ENCODE measurements at regions of chr4 and their contacts with region 1.

Region 1: GRCh38 chr4:39469429-39470077 is 10.7 kb downstream of the LIAS start:
- DNase-seq: peak; percentile 81
- ATAC-seq: peak; percentile 99
- H3K4me3 ChIP-seq: peak overlapping the region in 1 of 5 experiments; percentile 14
- H3K4me3 Mint-ChIP-seq: peak overlapping the region; percentile 59
- H3K27ac ChIP-seq: peak overlapping the region; percentile 36 to 68
- H3K27ac Mint-ChIP-seq: peak overlapping the region; percentile 92
- H3K4me1 ChIP-seq: peaks cover 5 to 7% of the 10 kb centered on the region in 2 donors
- H3K4me1 Mint-ChIP-seq: peaks cover 9% of the 10 kb centered on the region
- H3K27me3 ChIP-seq: no peaks in the 10 kb centered on the region
- H3K27me3 Mint-ChIP-seq: no peaks in the 10 kb centered on the region
- CTCF ChIP-seq: peak; percentile 87

Region 2: GRCh38 chr4:39446751-39447573 is 22.6 kb before region 1 on chr4:
- CTCF ChIA-PET with region 1: interaction called, 13 read pairs
- POLR2A ChIA-PET with region 1: no interaction called
- intact Hi-C with region 1: no loop called
- DNase-seq: peak; percentile 94
- ATAC-seq: peak; percentile 94
- H3K4me3 ChIP-seq: peak overlapping the region; percentile 12 to 64 (median 52)
- H3K4me3 Mint-ChIP-seq: peak overlapping the region; percentile 89
- H3K27ac ChIP-seq: peak overlapping the region; percentile 69
- H3K27ac Mint-ChIP-seq: peak overlapping the region; percentile 91
- H3K4me1 ChIP-seq: peaks cover 13 to 18% of the 10 kb centered on the region in 2 donors
- H3K4me1 Mint-ChIP-seq: peaks cover 23% of the 10 kb centered on the region
- H3K27me3 ChIP-seq: no peaks in the 10 kb centered on the region
- H3K27me3 Mint-ChIP-seq: no peaks in the 10 kb centered on the region
- CTCF ChIP-seq: peak; percentile 51

Region 3: GRCh38 chr4:39458505-39459300 is 10.8 kb before region 1 on chr4 and contains the starts of genes LIAS and RPL9:
- CTCF ChIA-PET with region 1: interaction called, 18 read pairs
- POLR2A ChIA-PET with region 1: interaction called, 5 read pairs
- intact Hi-C with region 1: loop called (anchors 1 kb)
- DNase-seq: peak; percentile 98
- ATAC-seq: peak; percentile 86
- H3K4me3 ChIP-seq: peak within 1 kb of the TSS; percentile 77 to 100 (median 98)
- H3K4me3 Mint-ChIP-seq: peak within 1 kb of the TSS; percentile 97
- H3K27ac ChIP-seq: peak within 1 kb of the TSS; percentile 98 to 99
- H3K27ac Mint-ChIP-seq: peak within 1 kb of the TSS; percentile 99
- H3K4me1 ChIP-seq: peaks cover 19 to 27% of the 10 kb centered on the region in 2 donors
- H3K4me1 Mint-ChIP-seq: peaks cover 38% of the 10 kb centered on the region
- H3K27me3 ChIP-seq: no peaks in the 10 kb centered on the region
- H3K27me3 Mint-ChIP-seq: no peaks in the 10 kb centered on the region
- CTCF ChIP-seq: no peak
- total RNA-seq, gene LIAS: 20.9 and 24.7 TPM in 2 replicates
- total RNA-seq, gene RPL9: 2,031 and 2,048 TPM in 2 replicates

Region 4: DNA sequence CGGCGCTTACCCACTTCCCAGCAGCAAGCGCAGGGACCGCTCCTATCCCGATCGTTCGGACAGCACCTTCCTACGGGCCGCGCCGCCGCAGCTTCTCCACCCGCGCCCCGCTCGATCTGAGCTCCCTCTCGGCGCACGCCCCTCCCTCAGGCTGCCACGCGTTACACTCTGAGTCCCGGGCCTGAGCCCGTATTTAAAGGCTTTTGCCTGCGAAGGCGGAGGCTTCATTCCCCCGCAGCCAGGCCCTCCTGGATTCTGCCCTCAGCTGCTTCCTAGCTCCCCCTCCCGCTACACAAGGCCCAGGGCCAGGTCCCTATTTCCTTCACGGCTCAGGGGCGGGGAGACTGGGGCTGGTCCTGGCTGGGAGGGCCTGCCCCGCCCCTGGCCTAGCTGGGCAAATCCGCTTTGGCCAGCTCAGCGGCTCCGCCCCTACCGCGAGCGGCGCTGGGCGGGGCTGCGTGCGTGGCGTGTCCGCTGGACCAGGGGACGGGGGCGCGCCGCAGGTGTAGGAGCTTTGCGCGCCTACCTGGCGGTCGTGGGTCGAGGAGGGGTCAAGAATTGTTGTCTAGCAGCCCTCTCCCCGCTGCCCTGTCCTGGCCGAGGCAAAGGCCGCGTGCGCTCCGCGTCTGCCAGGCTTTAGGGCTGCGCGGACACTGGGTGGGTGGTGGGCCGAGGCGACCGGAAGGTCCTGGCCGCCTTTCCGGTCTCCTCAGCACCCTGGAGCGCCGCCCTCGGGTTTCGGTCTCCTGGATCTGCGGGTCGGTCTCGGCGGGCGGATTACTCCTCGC is 57.9 kb after region 1 on chr4 and contains the start of gene UGDH:
- CTCF ChIA-PET with region 1: interaction called, 8 read pairs
- POLR2A ChIA-PET with region 1: no interaction called
- intact Hi-C with region 1: loop called (anchors 1 kb)
- DNase-seq: peak; percentile 93
- ATAC-seq: peak; percentile 99
- H3K4me3 ChIP-seq: peak within 1 kb of the TSS; percentile 46 to 98 (median 72)
- H3K4me3 Mint-ChIP-seq: peak within 1 kb of the TSS; percentile 98
- H3K27ac ChIP-seq: peak within 1 kb of the TSS; percentile 51 to 86
- H3K27ac Mint-ChIP-seq: peak within 1 kb of the TSS; percentile 96
- H3K4me1 ChIP-seq: peaks cover 14 to 15% of the 10 kb centered on the region in 2 donors
- H3K4me1 Mint-ChIP-seq: peaks cover 21% of the 10 kb centered on the region
- H3K27me3 ChIP-seq: no peaks in the 10 kb centered on the region
- H3K27me3 Mint-ChIP-seq: no peaks in the 10 kb centered on the region
- CTCF ChIP-seq: no peak
- total RNA-seq, gene UGDH: 18.5 and 25.4 TPM in 2 replicates

Region 5: DNA sequence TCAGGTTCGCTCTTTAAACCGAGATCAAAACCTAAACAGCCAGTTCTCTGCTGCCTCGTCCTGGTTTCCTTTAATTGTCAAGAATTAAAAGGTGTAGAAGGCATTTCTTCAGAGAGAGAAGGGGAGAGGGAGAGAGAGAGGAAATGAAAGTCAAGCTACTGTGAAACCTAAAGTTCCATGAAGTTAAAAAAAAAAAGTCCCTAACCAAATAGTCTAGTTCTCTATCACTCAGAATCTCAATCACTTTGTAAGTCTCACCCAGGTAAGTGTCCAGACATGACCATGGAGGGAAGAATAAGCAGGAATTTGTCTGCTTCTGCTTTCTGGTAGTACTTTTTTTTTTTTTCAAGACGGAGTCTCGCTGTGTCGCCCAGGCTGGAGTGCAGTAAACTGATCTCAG is 187.9 kb after region 1 on chr4:
- CTCF ChIA-PET with region 1: interaction called, 33 read pairs
- POLR2A ChIA-PET with region 1: no interaction called
- intact Hi-C with region 1: loop called (anchors 2 kb)
- DNase-seq: peak; percentile 73
- ATAC-seq: peak; percentile 88
- H3K4me3 ChIP-seq: peak overlapping the region in 1 of 5 experiments; percentile 9
- H3K4me3 Mint-ChIP-seq: peak overlapping the region; percentile 68
- H3K27ac ChIP-seq: peak overlapping the region in 1 of 2 donors; percentile 12
- H3K27ac Mint-ChIP-seq: peak overlapping the region; percentile 61
- H3K4me1 ChIP-seq: peaks cover 16 to 29% of the 10 kb centered on the region in 2 donors
- H3K4me1 Mint-ChIP-seq: peaks cover 25% of the 10 kb centered on the region
- H3K27me3 ChIP-seq: no peaks in the 10 kb centered on the region
- H3K27me3 Mint-ChIP-seq: no peaks in the 10 kb centered on the region
- CTCF ChIP-seq: no peak

Region 6: DNA sequence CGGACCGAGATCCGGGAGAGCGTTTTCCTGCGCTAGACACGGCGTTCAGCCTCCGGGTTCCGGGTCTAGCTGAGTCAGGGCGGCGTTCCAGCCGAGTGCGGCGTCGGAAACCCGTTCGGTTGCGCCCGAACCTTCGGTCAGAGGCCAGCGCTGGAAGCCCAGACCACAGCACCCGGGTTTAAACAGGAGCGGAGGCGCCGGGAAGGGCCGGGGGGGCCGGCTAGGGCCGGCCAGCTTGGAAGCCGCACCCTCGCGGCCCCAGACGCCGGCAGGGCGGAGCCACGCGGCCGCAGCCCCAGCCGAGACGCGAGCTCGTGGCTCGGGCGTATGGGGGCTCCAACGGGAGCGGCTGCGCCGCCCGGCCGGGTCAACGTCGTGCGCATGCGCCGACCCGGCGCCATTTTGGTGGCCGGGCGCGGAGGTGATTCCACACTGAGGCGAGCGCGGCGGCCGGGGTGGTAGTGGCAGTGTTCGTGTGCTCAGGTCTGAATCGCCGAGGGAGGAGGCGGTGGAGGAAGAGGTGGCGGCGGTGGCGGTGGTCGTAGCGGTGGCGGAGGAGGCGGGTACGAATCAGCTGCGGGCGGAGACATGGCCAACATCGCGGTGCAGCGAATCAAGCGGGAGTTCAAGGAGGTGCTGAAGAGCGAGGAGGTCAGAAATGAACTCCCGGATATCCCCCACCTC is 228.3 kb after region 1 on chr4 and contains the start of gene UBE2K:
- CTCF ChIA-PET with region 1: interaction called, 21 read pairs
- POLR2A ChIA-PET with region 1: no interaction called
- intact Hi-C with region 1: loop called (anchors 1 kb)
- DNase-seq: peak; percentile 94
- ATAC-seq: peak; percentile 92
- H3K4me3 ChIP-seq: peak within 1 kb of the TSS; percentile 74 to 98 (median 96)
- H3K4me3 Mint-ChIP-seq: peak within 1 kb of the TSS; percentile 100
- H3K27ac ChIP-seq: peak within 1 kb of the TSS; percentile 87 to 90
- H3K27ac Mint-ChIP-seq: peak within 1 kb of the TSS; percentile 99
- H3K4me1 ChIP-seq: peaks cover 23 to 29% of the 10 kb centered on the region in 2 donors
- H3K4me1 Mint-ChIP-seq: peaks cover 41% of the 10 kb centered on the region
- H3K27me3 ChIP-seq: no peaks in the 10 kb centered on the region
- H3K27me3 Mint-ChIP-seq: no peaks in the 10 kb centered on the region
- CTCF ChIP-seq: no peak
- total RNA-seq, gene UBE2K: 46.3 and 51.0 TPM in 2 replicates

Region 7: GRCh38 chr4:39846120-39846519 is 376.6 kb after region 1 on chr4:
- CTCF ChIA-PET with region 1: no interaction called
- POLR2A ChIA-PET with region 1: no interaction called
- intact Hi-C with region 1: loop called (anchors 10 kb)
- DNase-seq: no peak
- ATAC-seq: no peak
- H3K4me3 ChIP-seq: no peak overlapping the region
- H3K4me3 Mint-ChIP-seq: no peak overlapping the region
- H3K27ac ChIP-seq: no peak overlapping the region
- H3K27ac Mint-ChIP-seq: no peak overlapping the region
- H3K4me1 ChIP-seq: no peaks in the 10 kb centered on the region
- H3K4me1 Mint-ChIP-seq: no peaks in the 10 kb centered on the region
- H3K27me3 ChIP-seq: no peaks in the 10 kb centered on the region
- H3K27me3 Mint-ChIP-seq: no peaks in the 10 kb centered on the region
- CTCF ChIP-seq: no peak